Heart right ventricle (tissue), 16 donors: ENCODE measurements at regions of chr5 and their contacts with region 1.

Region 1: DNA sequence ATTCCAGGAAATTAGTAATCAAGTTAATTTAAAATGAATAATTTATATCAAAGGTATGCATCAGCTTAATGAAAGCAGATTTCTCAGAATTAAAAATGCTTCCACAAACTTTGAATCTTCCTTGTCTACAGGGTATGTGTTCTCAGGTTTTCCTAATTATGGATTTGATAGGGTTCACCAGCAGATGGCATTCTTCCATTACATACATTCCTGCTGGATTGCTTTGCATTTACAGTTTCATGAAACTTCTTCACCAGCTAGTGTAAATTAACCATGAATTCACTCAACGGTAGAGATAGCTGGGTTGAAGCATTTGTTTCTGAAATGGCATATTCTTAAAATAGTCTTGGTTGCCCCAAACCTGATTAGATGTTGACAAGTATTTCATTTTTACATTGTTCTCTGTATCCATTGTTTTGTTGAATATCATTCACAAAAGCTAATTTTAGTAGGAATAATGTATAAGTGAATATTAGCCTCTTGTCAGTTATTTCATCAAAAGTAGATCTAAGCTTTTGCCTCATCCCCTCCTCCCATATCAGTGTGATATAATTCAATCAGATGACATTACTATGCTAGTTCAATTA is 68.7 kb upstream of the WDR41 start:
- DNase-seq: no peak
- ATAC-seq: no peak
- H3K4me3 ChIP-seq: no peak overlapping the region
- H3K27ac ChIP-seq: no peak overlapping the region
- H3K4me1 ChIP-seq: peaks cover 0 to 4% (median 0%) of the 10 kb centered on the region in 9 donors
- H3K27me3 ChIP-seq: peaks cover 0 to 22% (median 0%) of the 10 kb centered on the region in 7 donors
- CTCF ChIP-seq: peak in 8 of 9 donors; percentile 27 to 64 (median 52)

Region 2: GRCh38 chr5:77590347-77590746 is 29.6 kb after region 1 on chr5:
- intact Hi-C with region 1: loop called in 1 of 10 experiments (anchors 1 kb)
- DNase-seq: no peak
- ATAC-seq: no peak
- H3K4me3 ChIP-seq: no peak overlapping the region
- H3K27ac ChIP-seq: no peak overlapping the region
- H3K4me1 ChIP-seq: no peaks in the 10 kb centered on the region
- H3K27me3 ChIP-seq: peaks cover 0 to 18% (median 0%) of the 10 kb centered on the region in 7 donors
- CTCF ChIP-seq: no peak

Region 3: GRCh38 chr5:78008356-78008967 is 447.7 kb after region 1 on chr5:
- intact Hi-C with region 1: loop called in 6 of 10 experiments (anchors 5 to 10 kb)
- DNase-seq: no peak
- ATAC-seq: peak in 2 of 8 donors; percentile 52 to 59
- H3K4me3 ChIP-seq: no peak overlapping the region
- H3K27ac ChIP-seq: no peak overlapping the region
- H3K4me1 ChIP-seq: peaks cover 0 to 10% (median 0%) of the 10 kb centered on the region in 9 donors
- H3K27me3 ChIP-seq: no peaks in the 10 kb centered on the region
- CTCF ChIP-seq: peak; percentile 42 to 85 (median 70)

Region 4: GRCh38 chr5:78269088-78269703 is 708.4 kb after region 1 on chr5:
- intact Hi-C with region 1: loop called in 1 of 10 experiments (anchors 5 kb)
- DNase-seq: no peak
- ATAC-seq: no peak
- H3K4me3 ChIP-seq: no peak overlapping the region
- H3K27ac ChIP-seq: peak overlapping the region in 2 of 10 donors; percentile 7 to 21
- H3K4me1 ChIP-seq: peaks cover 0 to 30% (median 18%) of the 10 kb centered on the region in 9 donors
- H3K27me3 ChIP-seq: no peaks in the 10 kb centered on the region
- CTCF ChIP-seq: peak; percentile 13 to 66 (median 54)